ENCODE measurements at regions of chr13 and their contacts with region 1.

Region 1: DNA sequence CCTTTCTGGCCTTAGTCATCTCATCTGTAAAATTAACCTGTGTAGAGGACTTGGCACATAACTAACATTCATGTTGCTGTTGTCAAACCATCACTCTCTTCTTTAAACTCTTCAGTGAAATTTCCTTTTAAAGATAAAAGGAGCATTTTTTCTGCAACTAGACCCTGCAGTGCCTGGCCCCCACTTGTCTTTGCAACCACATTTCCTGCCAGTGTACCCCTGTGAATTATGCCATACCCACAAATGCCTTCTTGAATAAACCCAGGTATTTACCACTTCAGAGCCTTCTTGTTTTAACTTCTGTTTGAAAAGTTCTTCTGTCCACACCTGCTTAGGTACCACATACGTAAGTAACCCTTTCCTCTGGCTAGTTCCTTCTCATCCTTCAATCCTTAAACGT is 118.8 kb downstream of the CDK8 start:
- DNase-seq: no peak
- ATAC-seq: no peak
- H3K4me3 ChIP-seq: no peak overlapping the region
- H3K27ac ChIP-seq: no peak overlapping the region
- H3K4me1 ChIP-seq: no peaks in the 10 kb centered on the region
- H3K27me3 ChIP-seq: no peaks in the 10 kb centered on the region
- CTCF ChIP-seq: no peak

Region 2: DNA sequence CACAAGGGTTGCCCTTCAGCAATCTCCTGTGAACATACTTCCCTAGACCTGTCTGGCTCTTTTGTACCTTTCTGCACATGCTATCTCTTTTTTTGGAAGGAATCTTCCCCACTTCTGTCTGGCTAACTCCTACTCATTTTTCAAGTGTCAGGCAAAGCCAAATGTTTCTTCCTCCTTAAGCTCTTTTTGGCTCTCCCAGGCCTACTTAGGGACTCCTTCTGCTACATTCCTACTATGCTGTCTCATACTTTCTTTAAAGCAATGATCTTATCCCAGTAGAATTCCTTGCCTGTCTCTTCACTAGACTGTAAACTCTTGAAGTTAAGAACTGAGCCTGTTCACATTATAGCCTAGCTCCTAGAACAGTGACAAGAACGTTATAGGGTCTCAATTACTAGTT is 69.8 kb after region 1 on chr13:
- CTCF ChIA-PET with region 1: no interaction called
- POLR2A ChIA-PET with region 1: no interaction called
- in situ Hi-C with region 1: no loop called
- intact Hi-C with region 1: no loop called
- DNase-seq: no peak
- ATAC-seq: no peak
- H3K4me3 ChIP-seq: no peak overlapping the region
- H3K27ac ChIP-seq: no peak overlapping the region
- H3K4me1 ChIP-seq: no peaks in the 10 kb centered on the region
- H3K27me3 ChIP-seq: no peaks in the 10 kb centered on the region
- CTCF ChIP-seq: no peak

Region 3: GRCh38 chr13:26458196-26458749 is 85.5 kb after region 1 on chr13:
- CTCF ChIA-PET with region 1: interaction called, 15 read pairs
- POLR2A ChIA-PET with region 1: no interaction called
- in situ Hi-C with region 1: no loop called
- intact Hi-C with region 1: no loop called
- DNase-seq: no peak
- ATAC-seq: no peak
- H3K4me3 ChIP-seq: no peak overlapping the region
- H3K27ac ChIP-seq: no peak overlapping the region
- H3K4me1 ChIP-seq: no peaks in the 10 kb centered on the region
- H3K27me3 ChIP-seq: 0 out of 2 replicates have a peak, but pooled peaks cover 4% of the 10 kb centered on the region
- CTCF ChIP-seq: no peak